ENCODE measurements at regions of chr4 and their contacts with region 1.

Region 1: DNA sequence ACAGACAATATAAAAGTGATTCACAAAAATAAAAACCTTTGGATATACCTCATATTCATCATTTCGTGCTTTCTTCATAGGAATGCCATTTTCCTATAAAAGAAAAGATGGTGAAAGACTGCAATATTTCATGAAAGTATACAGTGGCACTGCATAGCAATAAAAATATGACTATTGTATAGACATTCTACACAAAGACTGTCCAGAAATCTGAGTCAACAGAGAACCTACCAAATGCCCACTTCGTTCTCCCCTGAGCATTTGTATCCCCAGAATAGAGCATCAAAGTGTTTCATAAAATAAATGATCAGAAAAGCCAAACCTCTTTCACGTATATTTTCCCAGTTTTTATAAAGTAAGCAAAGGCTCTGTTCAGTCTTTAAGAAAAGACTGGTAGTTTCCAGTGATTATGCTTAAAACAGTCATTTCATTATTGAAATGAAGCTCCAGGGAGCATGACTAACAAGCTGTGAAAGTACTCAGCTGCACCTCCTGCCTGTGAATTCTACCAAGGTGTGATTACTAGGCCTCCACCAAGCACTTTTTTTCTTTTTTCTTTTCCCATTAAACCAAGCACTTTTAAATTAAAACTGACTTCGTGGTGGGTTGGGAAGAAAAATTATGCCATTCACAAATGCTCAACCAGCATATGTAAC is 20.2 kb downstream of the PPA2 start:
- DNase-seq: peak; percentile 63
- H3K4me3 Mint-ChIP-seq: no peak overlapping the region
- H3K27ac Mint-ChIP-seq: peak overlapping the region; percentile 47
- H3K4me1 Mint-ChIP-seq: peaks cover 41% of the 10 kb centered on the region
- H3K27me3 Mint-ChIP-seq: no peaks in the 10 kb centered on the region

Region 2: DNA sequence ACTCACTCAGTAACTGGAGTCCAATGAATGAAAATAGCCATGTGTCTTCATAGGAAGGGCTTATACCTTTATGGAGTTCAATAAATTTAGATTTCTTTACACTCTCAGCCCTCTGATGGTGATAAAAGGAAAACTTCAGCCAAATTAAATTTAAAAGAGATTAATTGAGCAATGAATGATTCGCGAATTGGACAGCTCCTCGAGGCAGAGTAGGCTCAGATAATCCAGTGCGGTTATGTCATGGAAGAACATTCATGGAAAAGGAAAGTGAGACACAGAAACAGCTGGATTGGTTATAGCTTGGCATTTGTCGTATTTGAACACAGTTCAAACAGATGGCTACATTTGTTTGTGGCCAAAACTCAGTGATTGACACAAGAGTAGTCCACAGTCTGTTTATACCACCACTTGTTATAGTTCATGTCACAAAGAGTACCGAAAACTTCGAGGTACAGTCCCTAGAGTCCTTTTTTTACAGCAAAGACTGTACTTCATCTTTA is 1679.3 kb before region 1 on chr4:
- CTCF ChIA-PET with region 1: no interaction called
- intact Hi-C with region 1: no loop called
- DNase-seq: no peak
- H3K4me3 Mint-ChIP-seq: no peak overlapping the region
- H3K27ac Mint-ChIP-seq: no peak overlapping the region
- H3K4me1 Mint-ChIP-seq: no peaks in the 10 kb centered on the region
- H3K27me3 Mint-ChIP-seq: no peaks in the 10 kb centered on the region

Region 3: DNA sequence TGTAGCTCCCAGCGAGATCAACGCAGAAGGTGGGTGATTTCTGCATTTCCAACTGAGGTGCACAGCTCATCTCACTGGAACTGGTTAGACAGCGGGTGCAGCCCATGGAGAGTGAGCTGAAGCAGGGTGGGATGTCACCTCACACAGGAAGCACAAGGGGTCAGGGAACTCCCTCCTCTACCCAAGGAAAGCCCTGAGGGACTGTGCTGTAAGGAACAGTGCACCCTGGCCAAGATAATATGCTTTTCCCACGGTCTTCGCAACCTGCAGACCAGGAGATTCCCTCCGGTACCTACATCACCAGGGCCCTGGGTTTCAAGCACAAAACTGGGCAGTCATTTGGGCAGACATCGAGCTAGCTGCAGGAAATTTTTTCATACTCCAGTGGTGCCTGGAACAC is 523.4 kb before region 1 on chr4:
- CTCF ChIA-PET with region 1: interaction called, 5 read pairs
- intact Hi-C with region 1: loop called (anchors 5 kb)
- DNase-seq: no peak
- H3K4me3 Mint-ChIP-seq: no peak overlapping the region
- H3K27ac Mint-ChIP-seq: no peak overlapping the region
- H3K4me1 Mint-ChIP-seq: peaks cover 25% of the 10 kb centered on the region
- H3K27me3 Mint-ChIP-seq: no peaks in the 10 kb centered on the region

Region 4: GRCh38 chr4:105191621-105192210 is 262.0 kb before region 1 on chr4:
- CTCF ChIA-PET with region 1: interaction called, 3 read pairs
- intact Hi-C with region 1: loop called (anchors 5 kb)
- DNase-seq: no peak
- H3K4me3 Mint-ChIP-seq: no peak overlapping the region
- H3K27ac Mint-ChIP-seq: peak overlapping the region; percentile 87
- H3K4me1 Mint-ChIP-seq: peaks cover 85% of the 10 kb centered on the region
- H3K27me3 Mint-ChIP-seq: no peaks in the 10 kb centered on the region

Region 5: DNA sequence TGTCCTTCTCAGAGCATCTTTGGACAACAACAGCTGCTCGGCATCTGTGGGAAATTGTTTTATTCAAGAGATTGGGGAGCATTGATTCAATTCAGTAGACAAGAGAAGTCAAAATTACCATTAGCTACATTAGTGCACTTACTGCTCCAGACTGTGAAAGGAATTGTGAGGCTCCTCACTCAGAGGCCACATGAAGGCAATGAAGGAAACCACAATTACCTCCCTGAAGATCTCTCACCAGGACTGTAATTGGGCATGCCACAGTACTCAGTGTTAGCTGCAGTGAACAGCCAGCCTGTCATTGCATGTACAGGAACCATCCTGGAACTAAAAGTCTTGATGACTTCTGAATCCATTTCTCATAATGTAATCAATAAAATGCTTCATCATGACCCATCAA is 124.6 kb before region 1 on chr4:
- CTCF ChIA-PET with region 1: no interaction called
- intact Hi-C with region 1: loop called (anchors 5 kb)
- DNase-seq: no peak
- H3K4me3 Mint-ChIP-seq: no peak overlapping the region
- H3K27ac Mint-ChIP-seq: no peak overlapping the region
- H3K4me1 Mint-ChIP-seq: peaks cover 14% of the 10 kb centered on the region
- H3K27me3 Mint-ChIP-seq: no peaks in the 10 kb centered on the region

Region 6: DNA sequence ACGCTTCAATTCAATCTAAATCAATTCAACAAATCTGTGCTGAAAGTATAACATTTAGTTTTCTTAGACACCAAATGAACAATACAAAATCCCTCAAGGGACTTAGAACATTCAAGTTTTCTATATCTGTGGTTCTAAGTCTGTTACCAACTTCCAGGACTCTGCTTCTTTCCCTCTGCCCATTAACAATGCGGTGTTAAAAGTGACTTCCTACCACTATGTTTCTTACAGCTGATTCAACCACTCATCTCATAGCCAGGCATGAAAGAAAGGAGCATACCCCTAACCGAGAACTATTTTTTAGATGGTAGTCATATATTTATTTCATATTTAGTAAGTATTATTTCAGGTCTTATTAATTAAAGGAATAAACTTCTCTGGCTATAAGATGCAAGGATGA is 18.7 kb before region 1 on chr4:
- CTCF ChIA-PET with region 1: no interaction called
- intact Hi-C with region 1: loop called (anchors 2 kb)
- DNase-seq: no peak
- H3K4me3 Mint-ChIP-seq: no peak overlapping the region
- H3K27ac Mint-ChIP-seq: no peak overlapping the region
- H3K4me1 Mint-ChIP-seq: peaks cover 14% of the 10 kb centered on the region
- H3K27me3 Mint-ChIP-seq: no peaks in the 10 kb centered on the region

Region 7: GRCh38 chr4:105527081-105527480 is 73.4 kb after region 1 on chr4:
- CTCF ChIA-PET with region 1: no interaction called
- intact Hi-C with region 1: no loop called
- DNase-seq: no peak
- H3K4me3 Mint-ChIP-seq: no peak overlapping the region
- H3K27ac Mint-ChIP-seq: no peak overlapping the region
- H3K4me1 Mint-ChIP-seq: no peaks in the 10 kb centered on the region
- H3K27me3 Mint-ChIP-seq: peaks cover 5% of the 10 kb centered on the region

Region 8: GRCh38 chr4:105909787-105910281 is 456.2 kb after region 1 on chr4:
- CTCF ChIA-PET with region 1: no interaction called
- intact Hi-C with region 1: no loop called
- DNase-seq: no peak
- H3K4me3 Mint-ChIP-seq: no peak overlapping the region
- H3K27ac Mint-ChIP-seq: no peak overlapping the region
- H3K4me1 Mint-ChIP-seq: no peaks in the 10 kb centered on the region
- H3K27me3 Mint-ChIP-seq: no peaks in the 10 kb centered on the region

Measured in activated naive CD4-positive, alpha-beta T cell treated with anti-CD3 and anti-CD28 coated beads for 36 hours (primary cell).